HepG2 (cell line): ENCODE measurements at regions of chr13 and their contacts with region 1.

Region 1: DNA sequence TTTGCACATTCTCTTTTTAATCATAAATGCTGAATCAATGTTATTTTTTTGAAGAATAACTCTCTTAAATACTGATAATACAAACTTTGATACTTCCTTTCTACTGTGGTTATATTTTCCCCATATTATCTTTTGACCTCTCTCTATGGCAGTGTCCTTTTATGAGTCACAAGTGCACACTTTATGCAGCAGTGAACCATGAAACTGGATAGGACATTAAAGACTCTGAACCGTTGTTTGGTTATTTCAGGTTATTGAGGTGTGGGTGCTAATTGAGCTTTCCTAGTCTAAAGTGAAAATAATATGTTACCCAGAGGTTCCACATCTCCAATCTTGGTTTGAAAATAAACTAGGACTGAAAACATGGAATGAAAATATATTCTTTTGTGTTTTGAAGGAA is 71.4 kb downstream of the DGKH start:
- DNase-seq: no peak
- ATAC-seq: no peak
- H3K4me3 ChIP-seq: no peak overlapping the region
- H3K27ac ChIP-seq: no peak overlapping the region
- H3K4me1 ChIP-seq: no peaks in the 10 kb centered on the region
- H3K27me3 ChIP-seq: no peaks in the 10 kb centered on the region
- CTCF ChIP-seq: no peak
- EP300 ChIP-seq: no peak
- POLR2A ChIP-seq: no peak
- RAD21 ChIP-seq: no peak

Region 2: DNA sequence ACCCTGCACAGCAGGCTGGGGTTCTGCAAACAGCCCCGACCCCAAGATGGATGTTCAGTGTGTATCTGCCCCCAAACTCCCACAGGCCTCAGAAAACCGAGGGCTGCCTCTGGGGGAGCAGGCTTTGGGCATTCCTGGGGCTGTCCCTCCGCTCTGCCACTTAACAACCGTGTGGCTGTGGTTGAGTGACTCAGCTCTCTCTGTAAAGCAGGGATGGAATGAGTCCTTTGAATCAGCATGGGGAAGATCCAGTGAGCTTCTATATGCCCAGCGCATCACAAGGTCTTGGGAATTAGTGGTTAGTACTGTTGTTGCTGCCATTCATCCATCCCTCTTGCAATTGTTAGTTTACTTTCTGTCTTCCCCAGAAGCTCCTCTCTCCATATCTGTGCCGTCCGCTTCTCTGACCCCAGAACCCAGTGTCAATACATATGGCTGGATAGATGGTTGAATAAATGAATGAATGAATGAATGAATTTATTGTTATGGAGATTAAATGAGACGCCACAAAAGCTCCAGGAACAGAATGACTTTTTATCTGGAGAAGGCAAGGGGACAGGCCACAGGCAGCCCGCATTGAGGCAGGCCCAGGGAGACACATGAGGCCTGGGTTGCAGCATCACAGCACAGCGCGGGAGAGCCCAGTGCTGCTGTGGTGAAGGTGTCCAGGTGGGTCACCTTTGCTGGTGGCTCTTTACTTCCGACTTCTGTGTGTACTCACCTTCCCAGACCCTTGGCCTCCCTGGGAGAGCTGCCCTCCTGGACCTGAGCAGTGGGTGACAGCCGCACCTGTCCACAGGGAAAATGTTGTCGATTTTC is 573.3 kb before region 1 on chr13:
- CTCF ChIA-PET with region 1: no interaction called
- POLR2A ChIA-PET with region 1: no interaction called
- in situ Hi-C with region 1: no loop called
- intact Hi-C with region 1: loop called (anchors 5 kb)
- DNase-seq: peak; percentile 21
- ATAC-seq: peak; percentile 47
- H3K4me3 ChIP-seq: peak overlapping the region; percentile 2 to 62 (median 6)
- H3K27ac ChIP-seq: peak overlapping the region; percentile 27
- H3K4me1 ChIP-seq: peaks cover 28% of the 10 kb centered on the region
- H3K27me3 ChIP-seq: peaks cover 0 to 7% of the 10 kb centered on the region in 2 experiments; a peak in 2 of 5 replicates
- CTCF ChIP-seq: no peak
- EP300 ChIP-seq: no peak
- POLR2A ChIP-seq: no peak
- RAD21 ChIP-seq: no peak

Region 3: DNA sequence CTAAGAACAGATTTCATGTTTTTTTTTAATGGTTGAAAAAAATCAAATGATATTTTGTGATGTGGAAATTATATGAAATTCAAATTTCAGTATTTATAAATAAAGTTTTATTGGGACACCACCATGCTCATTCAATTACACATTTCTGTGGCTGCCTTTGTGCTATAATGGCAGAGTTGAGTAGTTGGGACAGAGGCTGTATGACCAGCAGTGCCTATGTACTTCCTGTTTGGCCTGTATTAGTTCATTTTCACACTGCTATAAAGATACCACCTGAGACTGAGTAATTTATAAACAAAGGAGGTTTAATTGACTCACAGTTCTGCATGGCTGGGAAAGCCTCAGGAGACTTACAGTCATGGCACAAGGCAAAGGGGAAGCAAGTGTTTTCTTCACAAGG is 185.6 kb after region 1 on chr13:
- CTCF ChIA-PET with region 1: no interaction called
- POLR2A ChIA-PET with region 1: no interaction called
- in situ Hi-C with region 1: no loop called
- intact Hi-C with region 1: no loop called
- DNase-seq: no peak
- ATAC-seq: no peak
- H3K4me3 ChIP-seq: no peak overlapping the region
- H3K27ac ChIP-seq: no peak overlapping the region
- H3K4me1 ChIP-seq: no peaks in the 10 kb centered on the region
- H3K27me3 ChIP-seq: no peaks in the 10 kb centered on the region
- CTCF ChIP-seq: no peak
- EP300 ChIP-seq: no peak
- POLR2A ChIP-seq: no peak
- RAD21 ChIP-seq: no peak